Heart right ventricle (tissue), 16 donors: ENCODE measurements at regions of chrX and their contacts with region 1.

Region 1: DNA sequence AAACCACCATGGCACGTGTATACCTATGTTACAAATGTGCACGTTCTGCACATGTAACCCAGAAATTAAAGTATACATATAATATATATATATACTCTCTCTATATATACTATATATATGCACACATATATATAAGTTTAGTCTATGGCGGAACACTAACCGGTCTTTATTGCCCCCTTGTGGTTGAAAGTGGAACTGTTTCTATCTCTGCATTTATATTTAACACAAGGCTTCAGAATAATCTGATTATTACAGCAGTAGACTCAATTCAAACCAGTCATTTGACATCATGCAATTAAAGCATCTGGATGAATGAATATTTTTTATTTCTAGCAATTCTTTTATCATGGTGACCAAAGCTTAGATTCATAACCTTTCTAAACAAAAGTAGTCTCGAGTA is 14.6 kb downstream of the RAB9B start:
- DNase-seq: peak in 1 of 2 donors; percentile 6
- ATAC-seq: no peak
- H3K4me3 ChIP-seq: no peak overlapping the region
- H3K27ac ChIP-seq: no peak overlapping the region
- H3K4me1 ChIP-seq: no peaks in the 10 kb centered on the region
- H3K27me3 ChIP-seq: peaks cover 0 to 34% (median 0%) of the 10 kb centered on the region in 7 donors
- CTCF ChIP-seq: peak; percentile 48 to 89 (median 70)

Region 2: DNA sequence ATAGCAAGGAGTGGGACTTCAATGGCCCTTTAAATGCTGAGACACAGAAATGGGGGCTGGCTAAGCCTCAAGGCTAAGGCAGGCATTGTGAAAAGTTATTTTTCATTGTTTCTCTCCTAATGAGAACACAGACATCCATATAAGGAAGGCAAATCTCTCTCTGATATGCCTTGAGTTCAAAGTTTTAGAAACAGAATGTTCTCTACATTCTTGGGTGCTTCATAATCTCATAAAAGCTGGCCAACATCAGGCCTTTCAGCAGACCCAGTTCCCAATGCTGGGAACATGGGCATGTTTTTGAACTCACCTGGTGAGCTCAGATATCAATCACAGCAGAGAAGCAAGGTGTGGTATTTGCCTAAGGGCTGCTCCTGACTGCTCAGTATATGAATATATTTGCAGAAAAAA is 278.8 kb before region 1 on chrX:
- intact Hi-C with region 1: loop called in 9 of 10 experiments (anchors 2 to 10 kb)
- DNase-seq: no peak
- ATAC-seq: no peak
- H3K4me3 ChIP-seq: no peak overlapping the region
- H3K27ac ChIP-seq: no peak overlapping the region
- H3K4me1 ChIP-seq: no peaks in the 10 kb centered on the region
- H3K27me3 ChIP-seq: peaks cover 0 to 45% (median 0%) of the 10 kb centered on the region in 7 donors
- CTCF ChIP-seq: no peak

Region 3: GRCh38 chrX:103686199-103687072 is 131.1 kb before region 1 on chrX and contains the start of gene MORF4L2:
- intact Hi-C with region 1: loop called in 6 of 10 experiments (anchors 2 to 10 kb)
- DNase-seq: peak; percentile 78 to 94
- ATAC-seq: peak; percentile 88 to 96 (median 92)
- H3K4me3 ChIP-seq: peak within 1 kb of the TSS; percentile 44 to 77 (median 65)
- H3K27ac ChIP-seq: peak within 1 kb of the TSS; percentile 76 to 99 (median 95)
- H3K4me1 ChIP-seq: peaks cover 0 to 43% (median 14%) of the 10 kb centered on the region in 9 donors
- H3K27me3 ChIP-seq: peaks cover 0 to 20% (median 0%) of the 10 kb centered on the region in 7 donors
- CTCF ChIP-seq: no peak
- total RNA-seq, gene MORF4L2: 149 to 244 (median 191) TPM

Region 4: GRCh38 chrX:103697687-103698086 is 119.8 kb before region 1 on chrX:
- intact Hi-C with region 1: loop called in 2 of 10 experiments (anchors 10 kb)
- DNase-seq: no peak
- ATAC-seq: no peak
- H3K4me3 ChIP-seq: no peak overlapping the region
- H3K27ac ChIP-seq: no peak overlapping the region
- H3K4me1 ChIP-seq: no peaks in the 10 kb centered on the region
- H3K27me3 ChIP-seq: peaks cover 0 to 15% (median 0%) of the 10 kb centered on the region in 7 donors
- CTCF ChIP-seq: no peak

Region 5: GRCh38 chrX:103711533-103712369 is 105.8 kb before region 1 on chrX:
- intact Hi-C with region 1: loop called in 3 of 10 experiments (anchors 5 to 10 kb)
- DNase-seq: peak in 1 of 2 donors; percentile 23
- ATAC-seq: peak in 2 of 8 donors; percentile 27 to 59
- H3K4me3 ChIP-seq: no peak overlapping the region
- H3K27ac ChIP-seq: no peak overlapping the region
- H3K4me1 ChIP-seq: no peaks in the 10 kb centered on the region
- H3K27me3 ChIP-seq: no peaks in the 10 kb centered on the region
- CTCF ChIP-seq: peak; percentile 17 to 76 (median 62)

Region 6: DNA sequence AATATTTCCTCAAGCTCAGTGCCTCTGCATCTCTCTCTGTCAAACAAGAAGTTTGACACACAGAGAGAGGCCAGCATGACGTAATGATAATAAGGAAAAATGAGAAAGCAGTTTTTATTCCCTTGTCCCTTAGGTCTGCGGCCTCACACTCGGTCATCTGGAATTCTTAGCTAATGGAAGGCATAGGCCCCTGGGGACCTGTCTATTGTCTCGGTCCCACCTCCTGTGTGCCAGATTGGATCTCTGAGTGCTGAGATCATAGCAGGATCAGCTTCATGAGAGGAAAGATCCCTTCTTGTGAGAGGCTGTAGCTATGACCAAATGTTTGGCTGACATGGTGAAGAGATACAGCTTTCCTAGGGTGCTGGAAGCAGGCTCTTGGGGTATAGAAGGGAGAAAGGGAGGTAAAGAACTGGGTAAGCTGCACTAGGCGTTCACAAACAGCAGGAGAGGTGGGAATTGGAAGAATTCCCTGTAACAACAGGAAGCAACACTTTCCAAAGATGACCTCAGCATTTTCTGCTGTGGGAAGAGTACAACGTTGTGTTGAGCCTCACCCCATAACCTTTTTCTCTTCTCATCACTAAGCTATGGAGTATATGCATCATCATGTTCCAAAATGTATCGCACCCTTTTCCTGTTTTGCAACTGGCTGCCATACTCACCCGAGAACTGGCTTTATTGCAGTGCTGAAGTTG is 86.6 kb before region 1 on chrX:
- intact Hi-C with region 1: loop called in 1 of 10 experiments (anchors 10 kb)
- DNase-seq: peak in 1 of 2 donors; percentile 48
- ATAC-seq: peak in 7 of 8 donors; percentile 84 to 93 (median 88)
- H3K4me3 ChIP-seq: no peak overlapping the region
- H3K27ac ChIP-seq: peak overlapping the region in 9 of 10 donors; percentile 22 to 79 (median 57)
- H3K4me1 ChIP-seq: peaks cover 0 to 20% (median 10%) of the 10 kb centered on the region in 9 donors
- H3K27me3 ChIP-seq: peaks cover 0 to 64% (median 0%) of the 10 kb centered on the region in 7 donors
- CTCF ChIP-seq: no peak

Region 7: GRCh38 chrX:104189837-104190236 is 372.3 kb after region 1 on chrX:
- intact Hi-C with region 1: no loop called
- DNase-seq: no peak
- ATAC-seq: no peak
- H3K4me3 ChIP-seq: no peak overlapping the region
- H3K27ac ChIP-seq: no peak overlapping the region
- H3K4me1 ChIP-seq: no peaks in the 10 kb centered on the region
- H3K27me3 ChIP-seq: peaks cover 0 to 51% (median 0%) of the 10 kb centered on the region in 7 donors
- CTCF ChIP-seq: no peak